Calu3 (cell line): ENCODE measurements at regions of chr2 and their contacts with region 1.

Region 1: DNA sequence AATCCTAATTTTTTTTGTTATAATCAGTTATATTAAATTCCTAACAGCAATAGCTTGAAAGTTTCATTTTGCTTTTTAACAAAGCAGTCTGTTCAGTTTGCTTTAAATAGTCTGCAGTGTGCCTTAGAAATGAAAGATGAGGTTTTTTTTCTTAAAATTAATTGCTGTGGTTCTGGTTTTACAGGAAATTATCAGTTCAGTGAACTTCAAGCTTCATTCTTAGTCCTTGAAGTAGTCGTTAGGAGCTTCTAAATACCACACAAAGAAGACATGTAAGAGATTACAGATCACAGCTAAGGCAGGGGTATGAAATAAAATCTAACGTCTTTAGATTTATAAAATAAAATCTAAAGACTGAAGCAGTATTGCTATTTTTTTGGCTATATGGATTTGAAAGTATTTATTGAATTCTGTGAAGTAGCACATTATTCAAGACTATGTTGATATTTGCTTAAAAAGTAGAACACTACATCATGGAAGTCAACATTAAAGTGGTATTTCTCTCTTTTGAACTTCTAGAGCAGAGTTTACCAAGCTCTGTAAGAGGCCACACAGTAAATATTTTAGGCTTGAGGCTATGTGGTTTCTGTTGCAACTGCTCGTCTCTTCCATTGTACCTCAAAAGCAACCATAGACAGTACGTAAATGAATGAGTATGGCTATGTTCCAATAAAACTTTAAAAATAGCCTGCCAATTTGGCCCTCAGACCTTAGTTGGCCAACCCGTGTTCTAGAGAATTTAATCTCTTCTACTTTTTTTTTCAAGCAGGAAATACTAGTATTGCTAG is 81.5 kb upstream of the STON1 start:
- DNase-seq: no peak
- H3K4me3 Mint-ChIP-seq: no peak overlapping the region
- H3K27ac Mint-ChIP-seq: no peak overlapping the region
- H3K4me1 Mint-ChIP-seq: peaks cover 9% of the 10 kb centered on the region
- H3K27me3 Mint-ChIP-seq: no peaks in the 10 kb centered on the region
- CTCF ChIP-seq: no peak

Region 2: GRCh38 chr2:47313141-47313691 is 1135.3 kb before region 1 on chr2:
- CTCF ChIA-PET with region 1: interaction called, 16 read pairs
- intact Hi-C with region 1: no loop called
- DNase-seq: peak; percentile 73
- H3K4me3 Mint-ChIP-seq: no peak overlapping the region
- H3K27ac Mint-ChIP-seq: peak overlapping the region; percentile 66
- H3K4me1 Mint-ChIP-seq: peaks cover 48% of the 10 kb centered on the region
- H3K27me3 Mint-ChIP-seq: no peaks in the 10 kb centered on the region
- CTCF ChIP-seq: no peak